Heart left ventricle (tissue), 16 donors: ENCODE measurements at regions of chr5 and their contacts with region 1.

Region 1: GRCh38 chr5:56350598-56351170 is 117.6 kb upstream of the ANKRD55 start:
- DNase-seq: peak; percentile 72 to 91 (median 80)
- ATAC-seq: peak; percentile 16 to 95 (median 93)
- H3K4me3 ChIP-seq: no peak overlapping the region
- H3K27ac ChIP-seq: peak overlapping the region in 10 of 12 donors; percentile 3 to 76 (median 51)
- H3K4me1 ChIP-seq: peaks cover 0 to 50% (median 22%) of the 10 kb centered on the region in 12 donors
- H3K27me3 ChIP-seq: no peaks in the 10 kb centered on the region
- CTCF ChIP-seq: no peak
- POLR2A ChIP-seq: no peak

Region 2: DNA sequence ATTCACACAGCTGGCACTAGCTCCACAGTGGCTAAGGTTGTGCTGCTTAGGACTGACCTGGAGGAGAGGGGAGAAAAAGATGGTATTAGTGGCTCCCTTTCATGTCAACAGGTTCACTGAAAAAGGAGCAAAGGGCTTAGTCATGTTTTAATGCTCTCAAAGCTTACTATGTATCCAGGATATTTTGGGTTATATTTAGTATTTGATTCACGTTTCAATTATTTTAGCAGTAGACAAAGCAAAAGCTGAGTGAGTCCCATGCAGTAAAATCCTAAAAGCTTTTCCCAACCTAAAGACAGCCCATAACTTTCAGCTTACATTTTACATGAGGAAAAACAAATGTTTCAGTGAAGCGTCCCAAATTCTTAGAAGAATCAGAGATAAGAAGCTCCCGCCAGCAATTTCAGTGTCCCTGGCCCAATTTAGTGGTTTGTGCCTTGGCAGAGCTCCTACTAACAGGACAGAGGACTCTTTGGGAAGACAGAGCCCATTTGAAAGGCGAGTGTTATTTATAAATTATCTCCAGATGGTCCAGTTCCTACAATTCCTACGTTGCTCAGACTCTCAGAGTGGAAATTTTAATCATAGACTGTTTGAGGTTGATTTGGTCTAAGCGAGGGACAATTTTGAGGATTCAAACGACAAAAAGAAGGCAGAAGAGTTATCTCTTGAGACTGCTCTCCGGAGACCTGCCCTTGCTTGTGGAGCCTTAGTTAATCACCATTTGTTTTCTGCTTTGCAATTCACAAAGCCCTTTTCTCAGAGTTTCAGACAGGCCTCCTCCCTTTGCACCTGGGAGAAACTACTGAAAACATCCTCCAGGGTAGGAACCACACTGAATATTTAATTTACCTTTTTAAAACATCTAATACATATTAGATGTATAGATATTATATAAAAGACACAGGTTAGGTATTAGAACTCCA is 107.5 kb after region 1 on chr5:
- intact Hi-C with region 1: loop called in 2 of 10 experiments (anchors 10 kb)
- DNase-seq: peak in 3 of 5 donors; percentile 42 to 61 (median 54)
- ATAC-seq: peak; percentile 68 to 82 (median 73)
- H3K4me3 ChIP-seq: no peak overlapping the region
- H3K27ac ChIP-seq: peak overlapping the region in 10 of 12 donors; percentile 28 to 69 (median 52)
- H3K4me1 ChIP-seq: peaks cover 0 to 41% (median 17%) of the 10 kb centered on the region in 12 donors
- H3K27me3 ChIP-seq: no peaks in the 10 kb centered on the region
- CTCF ChIP-seq: no peak
- POLR2A ChIP-seq: no peak

Region 3: GRCh38 chr5:56481428-56482357 is 131.0 kb after region 1 on chr5:
- intact Hi-C with region 1: loop called in 2 of 10 experiments (anchors 5 kb)
- DNase-seq: peak; percentile 73 to 80 (median 76)
- ATAC-seq: peak; percentile 32 to 75 (median 62)
- H3K4me3 ChIP-seq: peak overlapping the region; percentile 51 to 79 (median 68)
- H3K27ac ChIP-seq: peak overlapping the region; percentile 88 to 98 (median 94)
- H3K4me1 ChIP-seq: peaks cover 4 to 45% (median 22%) of the 10 kb centered on the region in 12 donors
- H3K27me3 ChIP-seq: no peaks in the 10 kb centered on the region
- CTCF ChIP-seq: peak in 8 of 12 donors; percentile 14 to 52 (median 30)
- POLR2A ChIP-seq: no peak

Region 4: GRCh38 chr5:56588636-56589480 is 238.2 kb after region 1 on chr5:
- intact Hi-C with region 1: loop called in 1 of 10 experiments (anchors 5 kb)
- DNase-seq: peak; percentile 61 to 86 (median 72)
- ATAC-seq: peak; percentile 23 to 71 (median 64)
- H3K4me3 ChIP-seq: no peak overlapping the region
- H3K27ac ChIP-seq: peak overlapping the region; percentile 1 to 84 (median 61)
- H3K4me1 ChIP-seq: peaks cover 4 to 52% (median 39%) of the 10 kb centered on the region in 12 donors
- H3K27me3 ChIP-seq: no peaks in the 10 kb centered on the region
- CTCF ChIP-seq: no peak
- POLR2A ChIP-seq: no peak

Region 5: GRCh38 chr5:56615361-56616153 is 264.9 kb after region 1 on chr5:
- intact Hi-C with region 1: loop called in 1 of 10 experiments (anchors 10 kb)
- DNase-seq: peak in 2 of 5 donors; percentile 38 to 54
- ATAC-seq: peak; percentile 32 to 78 (median 68)
- H3K4me3 ChIP-seq: no peak overlapping the region
- H3K27ac ChIP-seq: peak overlapping the region in 11 of 12 donors; percentile 18 to 61 (median 45)
- H3K4me1 ChIP-seq: peaks cover 3 to 28% (median 19%) of the 10 kb centered on the region in 12 donors
- H3K27me3 ChIP-seq: no peaks in the 10 kb centered on the region
- CTCF ChIP-seq: no peak
- POLR2A ChIP-seq: no peak